Body of pancreas (tissue), 4 donors: ENCODE measurements at regions of chr14 and their contacts with region 1.

Region 1: DNA sequence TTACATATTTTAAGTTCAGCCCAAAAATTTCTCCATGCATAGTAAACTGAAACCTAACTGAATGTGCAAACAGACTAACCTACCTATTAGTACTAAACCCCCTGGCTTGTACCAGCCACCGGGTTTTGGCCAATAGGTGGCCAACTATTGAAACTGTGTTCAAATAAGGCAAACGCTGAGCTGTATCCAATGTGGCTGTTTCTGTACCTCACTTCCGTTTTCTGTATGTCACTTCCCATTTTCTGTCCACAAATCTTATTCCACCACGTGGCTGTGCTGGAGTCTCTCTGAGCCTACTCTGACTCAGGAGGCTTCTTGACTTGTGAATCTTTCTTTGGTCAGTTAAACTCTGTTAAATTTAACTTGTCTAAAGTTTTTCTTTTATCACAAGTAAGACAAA is 6.0 kb upstream of the FBXO34 start:
- DNase-seq: no peak
- ATAC-seq: no peak
- H3K4me3 ChIP-seq: no peak overlapping the region
- H3K27ac ChIP-seq: no peak overlapping the region
- H3K4me1 ChIP-seq: no peaks in the 10 kb centered on the region
- H3K27me3 ChIP-seq: no peaks in the 10 kb centered on the region
- CTCF ChIP-seq: no peak
- POLR2A ChIP-seq: no peak

Region 2: GRCh38 chr14:55354500-55354899 is 89.3 kb after region 1 on chr14:
- intact Hi-C with region 1: loop called (anchors 10 kb)
- DNase-seq: peak; percentile 47 to 68 (median 56)
- ATAC-seq: peak; percentile 79
- H3K4me3 ChIP-seq: no peak overlapping the region
- H3K27ac ChIP-seq: no peak overlapping the region
- H3K4me1 ChIP-seq: no peaks in the 10 kb centered on the region
- H3K27me3 ChIP-seq: no peaks in the 10 kb centered on the region
- CTCF ChIP-seq: peak in 6 of 7 experiments; percentile 37 to 71 (median 56)
- POLR2A ChIP-seq: no peak